Right ventricle myocardium inferior (tissue), 1 donor: ENCODE measurements at regions of chr15 and their contacts with region 1.

Region 1: GRCh38 chr15:83734487-83734886 is 80.6 kb downstream of the ADAMTSL3 start:
- DNase-seq: no peak
- ATAC-seq: peak; percentile 46

Region 2: DNA sequence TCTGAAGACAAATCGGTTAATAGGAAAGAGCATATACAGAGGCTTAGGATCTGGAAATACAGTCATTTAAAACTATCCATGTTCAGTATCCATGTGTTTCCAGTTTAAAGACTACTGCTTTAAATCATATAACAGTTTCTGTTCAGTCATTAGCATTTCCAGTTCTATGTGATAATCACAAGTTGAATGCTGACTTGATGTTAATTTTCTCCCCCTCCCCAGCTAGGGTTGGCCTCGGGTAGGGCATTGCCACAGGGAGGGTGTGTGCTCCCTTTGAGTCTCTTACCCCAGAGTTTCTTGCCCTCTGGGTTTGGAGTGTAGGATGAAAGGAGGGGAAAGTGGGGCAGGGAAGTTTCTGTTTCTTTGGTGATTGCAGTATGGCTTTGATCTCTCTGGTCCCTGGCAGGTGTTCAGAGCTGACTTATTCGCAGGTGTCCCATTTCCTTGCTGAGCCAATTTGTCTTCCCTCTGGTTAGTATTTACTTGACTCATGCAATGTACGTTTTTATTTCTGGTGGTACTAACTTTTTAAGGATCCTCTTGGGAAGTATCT is 201.0 kb before region 1 on chr15:
- intact Hi-C with region 1: no loop called
- DNase-seq: no peak
- ATAC-seq: no peak

Region 3: DNA sequence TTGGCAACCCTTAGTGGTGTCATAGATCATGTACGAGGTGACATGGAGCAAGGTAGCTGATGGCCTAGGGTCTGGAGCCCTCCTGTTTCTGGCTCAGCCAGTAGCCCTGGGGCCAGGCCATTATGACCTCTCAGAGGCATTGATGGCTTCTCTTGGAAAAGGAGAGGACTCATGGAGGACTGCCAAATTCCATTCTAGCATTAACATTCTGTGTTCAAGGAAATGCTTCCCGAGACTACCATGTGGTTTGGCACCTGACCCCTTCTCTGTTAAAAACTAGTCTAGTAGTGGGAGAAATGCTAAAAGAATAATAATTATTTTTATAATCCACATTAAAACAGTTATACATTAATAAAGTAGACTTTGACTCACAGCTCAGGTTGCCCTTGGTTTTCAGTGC is 120.8 kb before region 1 on chr15:
- intact Hi-C with region 1: no loop called
- DNase-seq: no peak
- ATAC-seq: no peak

Region 4: GRCh38 chr15:83784975-83785374 is 50.5 kb after region 1 on chr15:
- intact Hi-C with region 1: no loop called
- DNase-seq: no peak
- ATAC-seq: no peak

Region 5: GRCh38 chr15:83854321-83854720 is 119.8 kb after region 1 on chr15:
- intact Hi-C with region 1: no loop called
- DNase-seq: no peak
- ATAC-seq: no peak

Region 6: DNA sequence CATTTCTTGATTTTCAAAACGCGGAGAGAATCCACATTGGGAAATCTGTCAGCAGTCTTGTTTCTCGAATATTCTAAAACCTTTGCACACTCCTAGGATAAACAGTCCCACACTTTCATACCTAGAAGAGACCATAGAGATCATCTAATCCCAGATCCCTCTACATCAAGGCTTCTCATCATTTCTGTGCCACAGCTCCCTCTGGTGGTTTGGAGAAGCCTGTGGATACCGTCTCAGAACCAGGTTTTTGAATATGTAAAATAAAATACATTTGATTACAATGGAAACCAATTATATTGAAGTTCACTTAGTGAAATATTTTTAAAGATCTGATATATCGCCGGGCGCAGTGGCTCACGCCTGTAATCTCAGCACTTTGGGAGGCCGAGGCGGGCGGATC is 289.1 kb after region 1 on chr15:
- intact Hi-C with region 1: loop called (anchors 5 kb)
- DNase-seq: no peak
- ATAC-seq: no peak